Activated CD4-positive, alpha-beta memory T cell treated with anti-CD3 and anti-CD28 coated beads for 36 hours (primary cell): ENCODE measurements at regions of chr2 and their contacts with region 1.

Region 1: DNA sequence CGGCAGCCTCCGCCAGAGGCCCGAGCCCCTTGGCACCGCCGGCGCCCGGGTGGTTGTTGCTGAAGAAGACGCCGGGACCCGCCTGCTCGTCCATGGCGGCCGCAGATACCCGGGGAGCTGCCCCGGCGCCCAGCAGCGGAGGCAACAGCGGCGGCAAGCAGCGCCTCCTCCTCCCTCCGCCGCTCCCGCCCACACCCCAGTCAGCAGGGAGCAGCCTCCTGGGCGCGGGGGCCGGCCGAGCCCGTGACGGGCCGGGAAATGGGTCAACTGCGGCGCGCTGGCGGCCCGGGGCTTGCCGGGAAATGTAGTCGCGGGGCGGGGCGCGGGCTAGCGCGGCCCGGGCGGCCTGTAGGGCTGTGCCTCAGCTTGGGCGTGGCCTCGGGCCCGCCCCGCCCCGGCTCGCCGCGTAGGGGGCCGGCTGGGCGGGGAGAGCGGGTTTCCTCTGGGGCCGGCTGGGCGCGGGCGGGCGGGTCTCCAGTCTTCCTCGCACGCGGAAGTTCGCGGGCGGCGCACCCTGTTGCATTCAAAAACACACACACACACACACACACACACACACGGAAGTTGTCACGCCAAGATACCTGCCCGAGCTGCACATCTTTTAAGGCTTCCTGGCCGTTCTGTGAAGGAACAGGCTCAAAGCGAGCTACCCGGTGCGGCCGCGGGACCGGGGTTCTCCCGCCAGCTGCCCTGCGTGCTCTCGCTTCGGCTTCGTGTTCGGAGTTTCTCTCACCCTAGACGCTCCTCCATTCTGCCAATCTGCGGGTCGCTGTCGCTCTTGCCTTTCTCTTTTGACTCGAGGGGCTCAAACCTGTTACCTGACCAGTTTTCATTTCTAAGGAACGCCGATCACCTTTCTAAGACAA is at the start of gene STRN:
- DNase-seq: peak; percentile 98
- H3K4me3 Mint-ChIP-seq: peak within 1 kb of the TSS; percentile 96
- H3K27ac Mint-ChIP-seq: peak within 1 kb of the TSS; percentile 91
- H3K4me1 Mint-ChIP-seq: peaks cover 42% of the 10 kb centered on the region
- H3K27me3 Mint-ChIP-seq: no peaks in the 10 kb centered on the region
- total RNA-seq, gene STRN: 22.3 to 25.0 TPM

Region 2: DNA sequence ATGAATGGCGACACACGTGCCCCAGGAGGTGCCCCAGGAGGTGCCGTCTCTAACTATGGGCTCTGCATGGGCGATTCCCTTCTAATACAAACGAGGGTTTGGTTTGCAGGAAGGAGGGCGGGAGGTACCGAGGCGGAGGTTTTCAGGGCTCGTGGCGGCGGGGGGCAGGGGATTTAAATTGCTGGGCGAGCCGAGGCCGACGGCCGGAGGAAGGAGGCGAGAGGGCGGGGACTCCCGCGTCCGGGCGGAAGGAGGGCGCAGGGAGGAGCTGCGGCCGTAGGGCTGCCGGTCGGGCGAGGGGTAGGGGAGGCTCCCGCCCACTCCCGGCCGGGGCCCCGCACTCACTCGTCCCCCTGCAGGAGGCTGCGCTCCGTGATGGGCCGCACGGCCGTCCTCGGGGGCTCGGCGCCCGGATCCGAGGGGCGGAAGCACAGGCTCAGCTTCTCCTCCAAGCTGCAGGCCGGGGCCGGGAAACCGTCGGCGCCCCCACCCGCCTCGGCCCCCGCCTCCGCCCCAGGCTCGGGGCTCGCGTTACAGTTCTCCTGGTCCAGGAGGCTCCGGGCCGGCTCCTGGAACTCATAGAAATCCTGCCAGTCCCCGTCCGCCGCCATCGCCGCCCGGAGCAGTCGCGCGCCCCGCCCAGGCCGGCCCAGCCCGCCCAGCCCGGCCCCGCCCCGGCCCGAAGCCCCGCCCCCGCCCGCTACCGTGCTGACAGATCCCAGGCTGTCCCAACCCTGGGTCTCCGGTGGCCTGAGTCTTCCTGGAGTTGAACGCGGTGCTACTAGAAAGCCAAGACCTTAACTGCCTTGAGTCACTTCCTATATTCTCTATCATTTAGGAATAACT is 368.8 kb before region 1 on chr2 and contains the start of gene FEZ2:
- CTCF ChIA-PET with region 1: interaction called, 4 read pairs
- POLR2A ChIA-PET with region 1: no interaction called
- intact Hi-C with region 1: loop called (anchors 5 kb)
- DNase-seq: peak; percentile 78
- H3K4me3 Mint-ChIP-seq: peak within 1 kb of the TSS; percentile 93
- H3K27ac Mint-ChIP-seq: peak within 1 kb of the TSS; percentile 83
- H3K4me1 Mint-ChIP-seq: peaks cover 31% of the 10 kb centered on the region
- H3K27me3 Mint-ChIP-seq: no peaks in the 10 kb centered on the region
- total RNA-seq, gene FEZ2: 6.8 to 9.3 TPM

Region 3: DNA sequence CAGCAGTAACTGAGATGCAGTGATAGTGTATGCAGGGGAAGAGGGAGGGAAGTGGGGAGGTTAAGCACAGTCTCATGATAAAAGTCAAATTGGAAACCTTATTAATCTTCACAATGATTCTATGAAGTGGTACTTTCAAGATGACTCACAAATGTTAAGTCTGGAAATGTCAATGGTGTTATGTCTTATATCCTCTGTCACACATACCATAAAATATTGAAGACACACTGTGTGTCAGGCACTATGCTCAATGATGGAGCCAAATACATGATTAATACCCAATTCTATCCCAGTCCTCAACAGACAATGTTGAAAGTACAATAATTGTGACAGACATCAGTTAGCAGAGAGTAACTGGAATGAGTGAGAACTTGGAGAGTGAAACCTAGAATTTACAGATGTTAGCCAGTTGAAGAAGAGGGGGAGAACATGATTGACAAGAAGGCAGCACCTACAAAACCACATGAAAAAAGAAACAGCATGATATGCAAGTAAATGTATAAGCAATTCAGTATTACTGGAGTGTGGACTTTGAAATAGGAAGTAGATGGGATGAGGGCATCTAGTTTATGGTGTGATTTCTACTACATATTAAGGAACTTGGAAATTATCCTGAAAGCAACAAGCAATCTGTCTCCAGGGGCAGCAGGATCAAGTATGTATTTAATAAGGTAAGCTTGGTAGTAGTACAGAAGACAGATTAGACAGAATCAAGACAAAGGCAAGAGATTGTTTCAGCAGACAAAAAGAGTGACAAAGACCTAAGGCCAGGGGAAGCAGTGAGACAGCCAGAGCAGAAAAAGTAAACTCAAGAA is 107.8 kb before region 1 on chr2:
- CTCF ChIA-PET with region 1: no interaction called
- POLR2A ChIA-PET with region 1: no interaction called
- intact Hi-C with region 1: loop called (anchors 2 kb)
- DNase-seq: no peak
- H3K4me3 Mint-ChIP-seq: no peak overlapping the region
- H3K27ac Mint-ChIP-seq: peak overlapping the region; percentile 39
- H3K4me1 Mint-ChIP-seq: peaks cover 19% of the 10 kb centered on the region
- H3K27me3 Mint-ChIP-seq: no peaks in the 10 kb centered on the region

Region 4: DNA sequence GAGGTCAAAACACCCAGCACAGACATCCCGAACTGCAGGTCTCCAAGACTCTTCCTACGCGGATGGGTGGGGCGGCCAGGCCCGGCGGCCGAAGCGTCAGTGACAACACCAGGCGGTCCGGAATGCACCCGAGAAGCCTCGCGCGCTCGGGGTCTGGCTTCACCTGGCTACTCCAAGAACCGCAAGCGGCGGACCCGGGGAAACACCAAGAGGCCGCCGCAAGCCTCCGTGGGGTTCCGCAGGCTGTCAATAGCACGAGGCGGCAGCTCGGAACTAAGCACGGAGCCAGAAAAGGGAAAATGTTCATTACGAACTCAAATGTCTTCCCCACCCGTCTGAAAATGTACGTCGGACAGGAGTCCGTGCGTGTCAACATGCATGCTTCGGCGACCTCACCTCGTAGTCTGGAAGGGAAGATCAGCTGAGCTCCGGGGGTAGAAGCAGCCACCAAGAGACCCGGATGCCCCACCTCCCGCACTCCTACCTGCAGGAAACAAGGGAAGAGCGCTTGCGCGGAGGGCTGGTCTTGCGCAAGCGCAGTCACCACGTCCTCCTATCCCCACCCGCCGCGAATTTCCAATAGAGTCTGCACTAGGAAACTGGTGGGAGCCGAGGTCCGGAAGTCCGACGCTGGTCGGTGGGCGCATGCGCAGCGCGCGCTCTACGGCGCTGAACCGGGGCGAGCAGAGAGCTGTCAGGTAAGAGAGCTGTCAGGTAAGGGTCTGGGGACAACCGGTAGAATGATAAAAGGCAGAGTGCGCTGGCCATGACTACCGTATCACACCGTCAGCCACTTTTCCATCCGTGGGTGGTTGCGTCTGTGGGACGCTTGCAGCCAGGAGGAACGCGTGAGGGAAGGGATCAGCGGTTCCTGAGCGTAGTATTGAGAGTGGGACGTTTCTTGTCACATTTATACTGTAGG is 117.5 kb after region 1 on chr2 and contains the starts of genes GPATCH11 and HEATR5B:
- CTCF ChIA-PET with region 1: no interaction called
- POLR2A ChIA-PET with region 1: no interaction called
- intact Hi-C with region 1: loop called (anchors 1 kb)
- DNase-seq: peak; percentile 96
- H3K4me3 Mint-ChIP-seq: no peak within 1 kb of the TSS
- H3K27ac Mint-ChIP-seq: no peak within 1 kb of the TSS
- H3K4me1 Mint-ChIP-seq: peaks cover 36% of the 10 kb centered on the region
- H3K27me3 Mint-ChIP-seq: no peaks in the 10 kb centered on the region
- total RNA-seq, gene GPATCH11: 12.6 to 13.0 TPM
- total RNA-seq, gene HEATR5B: 18.1 to 20.3 TPM

Region 5: GRCh38 chr2:37376421-37377186 is 410.0 kb after region 1 on chr2:
- CTCF ChIA-PET with region 1: no interaction called
- POLR2A ChIA-PET with region 1: no interaction called
- intact Hi-C with region 1: loop called (anchors 5 kb)
- DNase-seq: peak; percentile 53
- H3K4me3 Mint-ChIP-seq: peak overlapping the region; percentile 20
- H3K27ac Mint-ChIP-seq: peak overlapping the region; percentile 58
- H3K4me1 Mint-ChIP-seq: peaks cover 30% of the 10 kb centered on the region
- H3K27me3 Mint-ChIP-seq: peaks cover 53% of the 10 kb centered on the region